Lower leg skin (tissue), 4 donors: ENCODE measurements at regions of chr1 and their contacts with region 1.

Region 1: DNA sequence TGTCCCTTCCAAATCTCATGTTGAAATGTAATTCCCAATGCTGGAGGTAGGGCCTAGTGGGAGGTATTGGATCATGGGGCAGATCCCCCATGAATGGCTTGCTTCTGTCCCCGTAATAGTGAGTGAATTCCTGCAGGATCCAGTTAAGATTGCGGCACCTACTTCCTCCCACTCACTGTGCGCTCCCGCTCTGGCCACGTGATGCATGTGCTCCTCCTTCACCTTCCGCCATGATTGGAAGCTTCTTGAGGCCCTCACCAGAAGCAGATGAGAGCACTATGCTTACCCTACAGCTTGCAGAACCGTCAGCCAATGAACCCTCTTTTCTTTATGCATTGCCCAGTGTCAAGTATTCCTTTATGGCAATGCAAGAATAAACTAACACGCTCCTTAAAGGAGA is 14.9 kb upstream of the RAB3GAP2 start:
- DNase-seq: no peak
- H3K4me3 ChIP-seq: no peak overlapping the region
- CTCF ChIP-seq: no peak
- POLR2A ChIP-seq: no peak

Region 2: GRCh38 chr1:219988387-219988786 is 298.7 kb before region 1 on chr1:
- intact Hi-C with region 1: no loop called
- DNase-seq: no peak
- H3K4me3 ChIP-seq: no peak overlapping the region
- CTCF ChIP-seq: no peak
- POLR2A ChIP-seq: no peak

Region 3: GRCh38 chr1:220420726-220421125 is 133.6 kb after region 1 on chr1:
- intact Hi-C with region 1: no loop called
- DNase-seq: no peak
- H3K4me3 ChIP-seq: no peak overlapping the region
- CTCF ChIP-seq: no peak
- POLR2A ChIP-seq: no peak

Region 4: GRCh38 chr1:220810179-220810653 is 523.1 kb after region 1 on chr1:
- intact Hi-C with region 1: no loop called
- DNase-seq: peak; percentile 71 to 95
- H3K4me3 ChIP-seq: no peak overlapping the region
- CTCF ChIP-seq: peak in 1 of 3 donors; percentile 93
- POLR2A ChIP-seq: no peak

Region 5: DNA sequence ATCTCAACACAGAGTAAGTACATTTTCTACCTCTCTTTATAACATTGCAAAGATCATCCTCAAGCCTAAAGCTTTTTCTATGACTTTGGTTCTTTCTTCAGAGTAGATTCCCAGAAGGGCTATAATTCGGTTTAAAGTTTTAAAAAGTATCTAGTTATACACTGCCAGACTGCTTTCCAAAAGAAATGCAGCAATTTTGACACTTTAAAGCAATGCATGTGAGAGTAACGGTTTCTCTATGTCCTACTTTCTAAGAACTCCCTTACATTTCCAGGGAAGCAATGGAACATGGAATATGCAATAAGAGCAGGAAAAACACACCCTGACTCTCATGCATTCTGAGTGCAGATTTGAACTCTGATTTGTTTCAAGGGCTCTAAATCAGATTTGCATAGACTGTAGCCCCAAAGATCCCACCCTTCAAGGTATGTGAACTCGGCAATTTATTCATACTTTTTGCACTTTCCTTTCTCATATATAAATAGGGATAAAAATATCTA is 1929.2 kb after region 1 on chr1:
- intact Hi-C with region 1: loop called (anchors 5 kb)
- DNase-seq: no peak
- H3K4me3 ChIP-seq: no peak overlapping the region
- CTCF ChIP-seq: no peak
- POLR2A ChIP-seq: no peak